GM10248 (cell line): ENCODE measurements at regions of chr12 and their contacts with region 1.

Region 1: DNA sequence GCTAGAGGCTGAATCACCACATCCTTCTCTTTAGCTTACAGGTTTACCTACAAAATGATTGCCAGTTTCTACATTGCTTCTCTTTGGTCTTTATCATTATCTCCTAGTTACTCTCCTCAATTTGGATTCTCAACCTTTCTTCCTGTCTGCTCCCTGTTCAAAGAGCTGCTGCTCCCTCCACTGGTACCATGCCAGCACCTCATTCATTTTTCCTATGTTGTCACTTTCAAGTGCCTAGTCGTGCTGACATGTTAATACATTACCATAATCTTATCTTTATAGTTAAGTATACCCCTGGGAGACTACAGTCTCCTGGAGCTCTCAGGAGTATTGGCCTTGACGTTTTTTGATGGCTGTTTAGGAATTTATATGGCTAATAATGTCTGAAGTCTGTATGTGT is 14.2 kb downstream of the FRS2 start:
- DNase-seq: no peak
- CTCF ChIP-seq: no peak

Region 2: DNA sequence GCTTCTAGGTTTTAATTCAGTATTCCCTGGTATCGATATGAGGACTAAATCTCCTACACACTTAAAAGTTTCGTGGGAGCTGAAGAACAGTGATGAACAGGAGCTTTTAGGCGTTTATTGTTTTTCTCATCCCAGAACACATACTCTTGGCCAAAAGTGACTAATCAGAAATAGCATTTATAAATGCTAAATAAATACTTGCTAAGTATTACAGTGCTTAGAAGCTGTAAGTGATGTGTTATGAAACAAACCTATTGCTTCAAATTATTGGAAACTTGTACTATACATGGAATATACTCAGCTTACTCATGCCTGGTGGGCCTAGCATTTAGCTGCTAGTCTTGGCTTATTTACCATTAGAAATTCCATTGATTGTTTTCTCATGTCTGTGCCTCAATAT is 10.6 kb after region 1 on chr12:
- CTCF ChIA-PET with region 1: interaction called, 18 read pairs
- POLR2A ChIA-PET with region 1: no interaction called
- DNase-seq: no peak
- CTCF ChIP-seq: no peak

Region 3: DNA sequence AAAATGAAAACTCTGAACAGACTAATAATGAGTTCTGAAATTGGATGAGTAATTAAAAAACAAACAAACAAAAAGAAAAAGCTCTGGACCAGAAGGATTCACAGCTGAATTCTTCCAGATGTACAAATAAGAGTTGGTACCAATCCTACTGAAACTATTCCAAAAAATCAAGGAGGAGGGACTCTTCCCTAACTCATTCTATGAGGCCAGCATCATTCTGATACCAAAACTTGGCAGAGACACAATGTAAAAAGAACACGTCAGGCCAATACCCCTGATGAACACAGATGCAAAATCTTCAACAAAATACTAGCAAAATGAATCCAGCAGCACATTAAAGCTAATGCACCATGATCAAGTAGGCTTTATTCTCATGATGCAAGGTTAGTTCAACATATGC is 574.9 kb after region 1 on chr12:
- CTCF ChIA-PET with region 1: no interaction called
- POLR2A ChIA-PET with region 1: no interaction called
- DNase-seq: no peak
- CTCF ChIP-seq: no peak